Activated T-helper 1 cell treated with anti-CD3 and anti-CD28 coated beads, Interleukin-12 subunit alpha, Interleukin-12 subunit beta, Interleukin-2, Interleukin-4 antibody, amounts not matched to agents 30 ng/mL and 10 ng/mL and 1 ng/mL, durations not matched to agents 14 hours and 24 hours and 36 hours (primary cell): ENCODE measurements at regions of chr11 and their contacts with region 1.

Region 1: DNA sequence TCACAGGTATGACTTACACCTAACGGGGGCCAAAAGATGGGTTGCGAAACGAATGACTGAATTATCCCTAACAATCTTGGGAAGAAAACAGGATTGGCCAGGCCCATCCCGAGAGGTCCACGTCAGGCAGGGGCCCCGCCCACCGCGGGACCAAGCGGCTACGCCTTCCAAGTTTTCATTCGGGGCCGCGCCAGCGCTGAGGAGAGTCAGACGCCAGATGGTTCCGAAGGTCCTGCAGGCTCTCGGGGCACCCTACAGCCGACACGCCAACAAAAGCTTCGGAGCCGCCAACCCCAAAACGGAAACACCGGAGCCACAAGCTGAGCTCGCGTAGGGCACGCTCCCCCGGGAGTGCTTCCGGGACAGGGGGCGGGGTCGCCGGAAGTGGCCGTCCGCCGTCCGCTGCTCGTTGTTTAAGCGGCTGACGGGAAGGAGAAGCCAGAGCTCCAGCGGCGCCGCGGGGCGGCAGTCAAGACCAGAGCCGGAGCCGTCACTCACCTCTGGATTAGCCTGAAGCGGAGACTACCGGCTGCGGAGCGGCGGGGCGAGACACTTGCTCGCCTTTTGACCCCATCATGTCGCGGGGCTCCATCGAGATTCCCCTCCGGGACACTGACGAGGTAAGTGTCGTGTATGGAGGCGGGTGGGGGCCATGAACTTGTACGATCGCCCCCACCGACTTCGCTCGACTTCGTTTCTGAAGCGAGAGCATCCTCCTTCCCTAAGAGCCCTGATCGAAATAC is at the start of gene CTR9:
- DNase-seq: peak; percentile 92
- H3K4me3 Mint-ChIP-seq: peak within 1 kb of the TSS; percentile 96
- H3K27ac Mint-ChIP-seq: peak within 1 kb of the TSS; percentile 87
- H3K4me1 Mint-ChIP-seq: peaks cover 38% of the 10 kb centered on the region
- H3K27me3 Mint-ChIP-seq: no peaks in the 10 kb centered on the region
- total RNA-seq, gene CTR9: 46.2 and 51.1 TPM in 2 replicates

Region 2: GRCh38 chr11:10792398-10792975 is 41.5 kb after region 1 on chr11:
- intact Hi-C with region 1: loop called (anchors 1 kb)
- DNase-seq: peak; percentile 74
- H3K4me3 Mint-ChIP-seq: peak overlapping the region; percentile 1
- H3K27ac Mint-ChIP-seq: no peak overlapping the region
- H3K4me1 Mint-ChIP-seq: peaks cover 21% of the 10 kb centered on the region
- H3K27me3 Mint-ChIP-seq: peaks cover 25% of the 10 kb centered on the region

Region 3: GRCh38 chr11:10808553-10809372 is 57.8 kb after region 1 on chr11 and contains the start of gene EIF4G2:
- intact Hi-C with region 1: loop called (anchors 1 kb)
- DNase-seq: peak; percentile 98
- H3K4me3 Mint-ChIP-seq: peak within 1 kb of the TSS; percentile 95
- H3K27ac Mint-ChIP-seq: peak within 1 kb of the TSS; percentile 98
- H3K4me1 Mint-ChIP-seq: peaks cover 43% of the 10 kb centered on the region
- H3K27me3 Mint-ChIP-seq: no peaks in the 10 kb centered on the region
- total RNA-seq, gene EIF4G2: 1,084 and 1,108 TPM in 2 replicates

Region 4: DNA sequence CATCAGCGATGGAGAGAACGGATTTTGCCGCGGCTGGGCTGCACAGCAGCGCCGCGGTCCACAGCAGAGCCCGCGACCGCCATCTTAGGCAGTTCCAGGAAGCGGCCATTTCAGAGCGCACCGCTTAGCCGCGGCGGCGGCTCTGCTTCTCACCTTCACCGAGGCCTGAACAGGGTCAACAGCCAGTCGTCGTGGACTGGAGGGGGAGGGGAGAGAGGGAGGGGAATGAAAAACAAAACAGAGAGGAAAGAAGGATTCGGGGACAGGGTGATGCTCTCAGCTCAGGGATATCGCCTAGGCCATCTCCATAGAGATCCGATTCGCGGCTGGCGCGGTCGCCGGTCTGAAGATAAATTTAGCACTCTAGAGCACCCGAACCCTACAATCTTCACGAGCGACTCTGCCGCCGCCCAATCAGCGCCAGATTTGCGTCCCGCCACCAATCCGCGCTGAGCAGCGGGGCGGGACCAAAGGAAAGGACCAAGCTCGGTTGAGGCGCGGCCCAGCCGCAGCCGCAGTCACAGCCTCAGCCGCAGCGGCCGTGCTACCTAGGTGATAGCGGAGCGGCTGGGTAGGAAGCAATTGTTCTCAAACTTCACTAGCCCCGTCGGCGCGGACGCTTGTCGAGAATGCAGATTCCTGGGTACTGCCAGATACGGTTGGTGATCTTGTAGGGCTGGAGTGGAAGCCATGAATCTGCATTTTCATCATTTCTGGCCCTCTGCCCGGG is 106.9 kb after region 1 on chr11 and contains the start of gene ZBED5:
- intact Hi-C with region 1: loop called (anchors 1 kb)
- DNase-seq: peak; percentile 94
- H3K4me3 Mint-ChIP-seq: peak within 1 kb of the TSS; percentile 100
- H3K27ac Mint-ChIP-seq: peak within 1 kb of the TSS; percentile 100
- H3K4me1 Mint-ChIP-seq: peaks cover 46% of the 10 kb centered on the region
- H3K27me3 Mint-ChIP-seq: no peaks in the 10 kb centered on the region
- total RNA-seq, gene ZBED5: 38.9 and 42.2 TPM in 2 replicates

Region 5: GRCh38 chr11:11157185-11157584 is 406.2 kb after region 1 on chr11:
- intact Hi-C with region 1: loop called (anchors 5 kb)
- DNase-seq: peak; percentile 12
- H3K4me3 Mint-ChIP-seq: no peak overlapping the region
- H3K27ac Mint-ChIP-seq: no peak overlapping the region
- H3K4me1 Mint-ChIP-seq: peaks cover 23% of the 10 kb centered on the region
- H3K27me3 Mint-ChIP-seq: peaks cover 6% of the 10 kb centered on the region

Region 6: DNA sequence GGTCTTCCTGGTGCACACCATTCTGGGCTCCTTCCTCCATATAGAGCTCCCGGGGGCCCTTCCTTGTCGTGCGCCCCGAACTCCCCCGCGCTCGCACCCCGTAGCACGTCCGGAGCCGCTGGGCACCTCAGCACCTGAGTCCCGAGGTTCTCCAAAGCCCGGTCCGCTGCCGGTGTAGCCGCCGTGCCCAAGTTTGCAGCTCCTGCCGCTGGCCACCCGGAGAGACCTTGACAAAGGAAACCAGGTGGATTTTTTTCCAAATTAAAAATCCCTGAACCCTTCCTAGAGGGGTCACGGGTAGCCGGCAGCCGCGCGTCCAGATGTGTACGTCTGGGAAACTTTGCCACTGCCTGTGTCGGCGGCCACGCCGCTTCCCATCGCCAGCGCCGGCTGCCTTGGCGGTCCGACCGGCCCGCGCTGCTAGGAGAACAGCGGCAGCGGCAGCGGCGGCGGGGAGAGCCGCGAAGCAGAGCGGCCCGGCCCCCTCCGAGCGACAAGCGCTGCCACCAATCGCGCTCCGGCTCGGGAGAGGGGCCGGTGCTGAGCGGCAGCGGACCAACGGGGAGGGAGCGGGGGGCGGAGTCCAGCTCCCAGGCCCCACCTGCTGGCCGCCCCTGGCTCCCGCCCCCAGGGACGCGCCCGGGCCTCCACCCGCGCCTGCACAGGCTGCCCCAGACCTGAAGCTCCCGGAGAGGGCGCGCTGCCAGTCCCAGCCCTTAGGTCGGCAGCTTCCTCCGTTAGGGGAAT is 870.7 kb after region 1 on chr11 and contains the start of gene GALNT18:
- intact Hi-C with region 1: loop called (anchors 5 kb)
- DNase-seq: peak; percentile 82
- H3K4me3 Mint-ChIP-seq: peak within 1 kb of the TSS; percentile 87
- H3K27ac Mint-ChIP-seq: no peak within 1 kb of the TSS
- H3K4me1 Mint-ChIP-seq: peaks cover 3% of the 10 kb centered on the region
- H3K27me3 Mint-ChIP-seq: peaks cover 45% of the 10 kb centered on the region
- total RNA-seq, gene GALNT18: 5.3 and 5.7 TPM in 2 replicates